Gastrocnemius medialis (tissue), 4 donors: ENCODE measurements at regions of chr16 and their contacts with region 1.

Region 1: GRCh38 chr16:56317998-56318826 is 107.1 kb downstream of the AMFR start:
- DNase-seq: peak; percentile 58 to 72
- ATAC-seq: peak; percentile 87 to 95
- H3K4me3 ChIP-seq: peak overlapping the region; percentile 9 to 41 (median 32)
- H3K27ac ChIP-seq: no peak overlapping the region
- H3K4me1 ChIP-seq: peaks cover 0 to 4% of the 10 kb centered on the region in 2 donors
- H3K27me3 ChIP-seq: no peaks in the 10 kb centered on the region
- CTCF ChIP-seq: peak; percentile 86 to 96 (median 88)
- POLR2A ChIP-seq: no peak

Region 2: DNA sequence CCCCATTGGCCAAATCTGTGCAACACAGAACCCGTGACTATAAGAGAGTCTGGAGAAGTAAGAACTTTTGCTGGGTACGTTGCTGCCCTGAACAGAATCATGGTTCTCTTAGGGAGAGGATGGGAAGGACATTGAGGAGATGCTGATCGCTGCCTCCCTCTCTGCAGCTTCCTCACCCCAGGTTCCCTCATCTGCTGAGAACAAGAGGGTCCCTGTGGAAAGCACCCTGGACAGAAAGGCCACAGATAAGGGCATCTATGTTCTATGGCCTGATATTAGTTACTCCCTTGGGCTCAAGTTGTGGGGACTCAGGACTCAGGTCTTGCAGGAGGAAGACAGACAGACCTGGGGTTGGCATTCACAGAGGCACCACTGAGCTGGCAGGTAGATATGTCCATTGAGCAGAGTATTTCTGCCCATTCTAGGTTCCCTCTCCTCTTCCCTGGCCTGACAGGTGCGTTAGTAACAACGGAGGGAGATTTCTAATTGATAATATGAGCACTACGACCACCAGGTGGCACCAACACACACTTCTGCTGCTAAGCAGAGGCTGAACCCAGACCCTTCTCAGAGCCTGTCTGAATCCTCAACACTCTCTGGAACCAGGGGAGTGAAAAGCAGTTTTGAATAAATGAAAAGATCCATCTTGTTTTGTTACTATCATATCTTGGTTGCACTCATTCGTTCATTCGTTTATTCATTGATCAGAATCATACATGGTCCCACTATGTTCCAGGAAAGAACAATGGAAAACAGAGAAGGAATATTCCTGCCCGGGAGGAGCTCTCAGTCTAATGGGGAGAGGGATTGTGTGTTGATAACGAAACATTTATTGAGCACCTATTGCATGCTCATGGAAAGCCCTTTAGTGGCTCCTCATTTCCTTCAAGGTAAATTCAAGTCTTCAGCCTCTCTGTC is 606.0 kb before region 1 on chr16:
- in situ Hi-C with region 1: loop called in 1 of 4 experiments (anchors 25 kb)
- intact Hi-C with region 1: no loop called
- DNase-seq: peak in 1 of 2 donors; percentile 30
- ATAC-seq: peak in 1 of 2 donors; percentile 74
- H3K4me3 ChIP-seq: no peak overlapping the region
- H3K27ac ChIP-seq: no peak overlapping the region
- H3K4me1 ChIP-seq: no peaks in the 10 kb centered on the region
- H3K27me3 ChIP-seq: no peaks in the 10 kb centered on the region
- CTCF ChIP-seq: peak; percentile 42 to 67 (median 59)
- POLR2A ChIP-seq: no peak

Region 3: DNA sequence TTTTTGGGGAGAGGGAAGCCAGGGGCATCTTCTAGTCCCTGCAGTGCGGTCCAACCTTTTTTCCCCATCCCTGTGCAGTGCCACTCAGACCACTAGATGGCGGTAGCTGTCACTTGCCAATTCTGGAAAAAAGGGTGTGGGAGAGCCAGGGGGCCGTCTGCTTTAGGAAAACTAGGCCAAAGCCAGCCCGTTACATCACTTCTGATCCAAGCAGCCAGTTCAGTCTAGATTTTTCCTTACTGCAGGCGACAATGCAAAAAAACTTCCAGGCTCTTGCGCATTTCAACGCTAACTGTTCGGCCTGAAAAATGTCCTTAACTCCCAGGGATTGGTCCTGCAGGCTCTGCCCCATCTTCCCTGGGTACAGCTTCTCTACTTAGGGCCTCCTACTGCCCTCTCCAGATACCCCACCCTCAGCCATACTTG is 373.8 kb before region 1 on chr16:
- in situ Hi-C with region 1: loop called (anchors 5 kb)
- intact Hi-C with region 1: loop called (anchors 1 kb)
- DNase-seq: peak; percentile 40 to 60
- ATAC-seq: peak; percentile 78 to 80
- H3K4me3 ChIP-seq: no peak overlapping the region
- H3K27ac ChIP-seq: no peak overlapping the region
- H3K4me1 ChIP-seq: peaks cover 0 to 3% of the 10 kb centered on the region in 2 donors
- H3K27me3 ChIP-seq: peaks cover 0 to 2% (median 0%) of the 10 kb centered on the region in 3 donors
- CTCF ChIP-seq: peak; percentile 66 to 89 (median 76)
- POLR2A ChIP-seq: no peak

Region 4: DNA sequence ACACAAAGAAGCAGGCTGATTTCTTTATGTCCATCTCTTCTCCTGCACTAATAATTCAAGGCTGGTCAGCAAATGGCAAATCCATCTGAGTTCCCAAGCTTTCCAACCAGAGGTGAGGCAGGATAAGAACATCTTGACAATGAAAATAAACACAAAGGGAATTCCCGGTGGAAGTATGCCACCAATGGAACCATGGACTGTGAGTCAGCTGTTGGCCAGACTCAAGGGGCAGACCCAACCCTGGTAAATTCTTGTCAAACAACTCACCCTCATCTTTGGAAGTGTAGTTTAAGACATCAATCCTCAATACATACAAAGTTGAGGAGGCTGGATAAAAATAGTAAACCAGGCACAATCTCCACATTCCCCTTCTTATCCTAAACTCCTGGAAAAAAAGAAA is 368.7 kb before region 1 on chr16:
- in situ Hi-C with region 1: loop called (anchors 5 kb)
- intact Hi-C with region 1: loop called (anchors 1 kb)
- DNase-seq: no peak
- ATAC-seq: no peak
- H3K4me3 ChIP-seq: no peak overlapping the region
- H3K27ac ChIP-seq: no peak overlapping the region
- H3K4me1 ChIP-seq: peaks cover 0 to 1% of the 10 kb centered on the region in 2 donors
- H3K27me3 ChIP-seq: no peaks in the 10 kb centered on the region
- CTCF ChIP-seq: no peak
- POLR2A ChIP-seq: no peak

Region 5: DNA sequence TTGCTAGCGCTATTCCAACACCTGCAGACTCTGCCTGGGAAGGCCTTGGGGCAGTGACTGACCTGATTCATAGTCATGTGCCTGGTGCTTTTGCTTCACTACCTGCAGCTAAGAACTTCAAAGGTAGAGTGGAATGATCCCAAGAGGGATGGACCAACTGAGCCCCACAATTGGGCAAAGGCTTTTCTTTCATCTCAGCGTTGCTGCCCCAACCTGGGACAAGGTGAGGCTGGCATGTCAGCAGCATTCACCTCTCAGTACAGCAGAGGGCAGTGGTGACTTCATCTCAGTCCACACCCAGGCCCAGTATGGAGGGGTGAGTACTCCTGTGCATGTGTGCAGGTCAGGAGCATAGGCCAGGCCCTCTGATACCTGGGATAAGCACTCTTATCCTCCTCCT is 276.5 kb before region 1 on chr16:
- in situ Hi-C with region 1: no loop called
- intact Hi-C with region 1: loop called (anchors 1 kb)
- DNase-seq: no peak
- ATAC-seq: no peak
- H3K4me3 ChIP-seq: no peak overlapping the region
- H3K27ac ChIP-seq: no peak overlapping the region
- H3K4me1 ChIP-seq: no peaks in the 10 kb centered on the region
- H3K27me3 ChIP-seq: no peaks in the 10 kb centered on the region
- CTCF ChIP-seq: no peak
- POLR2A ChIP-seq: no peak

Region 6: DNA sequence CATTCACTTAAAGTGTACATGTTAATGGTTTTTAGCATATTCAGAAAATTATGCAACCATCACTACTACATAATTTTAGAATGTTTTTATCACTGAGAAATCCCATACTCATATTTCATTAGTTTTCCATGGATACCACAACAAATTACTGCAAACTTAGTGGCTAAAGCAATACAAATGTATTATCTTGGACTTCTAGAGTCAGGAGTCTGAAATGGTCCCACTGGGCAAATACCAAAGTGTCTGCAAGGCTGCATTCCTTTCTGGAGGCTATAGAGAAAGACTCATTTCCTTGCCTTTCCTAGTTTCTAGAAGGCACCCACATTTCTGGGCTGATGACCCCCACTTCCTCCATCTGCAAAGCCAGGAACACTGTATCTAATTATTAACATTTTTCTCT is 143.8 kb before region 1 on chr16:
- in situ Hi-C with region 1: no loop called
- intact Hi-C with region 1: no loop called
- DNase-seq: no peak
- ATAC-seq: no peak
- H3K4me3 ChIP-seq: no peak overlapping the region
- H3K27ac ChIP-seq: no peak overlapping the region
- H3K4me1 ChIP-seq: no peaks in the 10 kb centered on the region
- H3K27me3 ChIP-seq: no peaks in the 10 kb centered on the region
- CTCF ChIP-seq: no peak
- POLR2A ChIP-seq: no peak

Region 7: DNA sequence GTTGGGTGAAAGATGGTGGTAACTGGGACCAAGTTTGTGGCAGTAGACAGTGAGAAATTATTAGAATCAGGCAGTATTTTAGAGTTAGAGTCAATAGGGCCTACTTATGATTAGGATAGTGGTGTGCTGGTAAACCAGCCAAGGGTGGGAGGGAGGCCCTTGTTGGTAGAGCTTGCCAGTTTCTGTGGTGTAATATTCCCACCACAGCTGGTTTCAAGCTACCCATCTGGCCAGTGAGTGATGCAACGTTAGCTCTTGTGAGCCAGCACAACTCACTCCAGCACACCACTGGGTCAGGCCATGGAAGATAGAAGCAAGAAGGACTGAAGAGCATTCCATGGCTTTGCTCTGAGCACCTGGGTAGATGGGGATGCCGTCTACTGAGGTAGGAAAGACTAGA is 92.0 kb before region 1 on chr16:
- in situ Hi-C with region 1: no loop called
- intact Hi-C with region 1: no loop called
- DNase-seq: peak; percentile 31 to 54
- ATAC-seq: peak; percentile 55 to 78
- H3K4me3 ChIP-seq: no peak overlapping the region
- H3K27ac ChIP-seq: no peak overlapping the region
- H3K4me1 ChIP-seq: no peaks in the 10 kb centered on the region
- H3K27me3 ChIP-seq: no peaks in the 10 kb centered on the region
- CTCF ChIP-seq: no peak
- POLR2A ChIP-seq: no peak

Region 8: DNA sequence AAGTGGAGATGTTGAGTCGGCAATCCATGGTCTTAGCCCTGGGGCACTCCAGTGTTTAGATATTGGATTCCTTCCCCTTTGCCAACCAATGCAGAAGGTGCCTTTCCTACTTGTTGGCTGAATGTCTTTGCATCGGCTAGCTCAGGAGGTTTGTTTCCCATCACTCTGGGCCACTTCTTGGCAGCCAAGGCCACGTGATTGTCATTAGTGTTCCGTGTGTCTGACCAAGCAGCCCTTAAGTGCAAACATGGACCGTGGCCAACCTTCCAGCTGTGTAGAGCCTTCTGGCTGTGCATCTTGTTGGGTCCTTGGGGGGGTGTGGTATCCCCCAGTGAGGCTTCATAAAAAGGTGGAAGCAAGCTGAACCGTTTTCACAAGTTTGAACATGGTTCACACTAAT is 61.0 kb before region 1 on chr16:
- in situ Hi-C with region 1: no loop called
- intact Hi-C with region 1: no loop called
- DNase-seq: peak in 1 of 2 donors; percentile 20
- ATAC-seq: no peak
- H3K4me3 ChIP-seq: no peak overlapping the region
- H3K27ac ChIP-seq: peak overlapping the region in 2 of 4 donors; percentile 55 to 57
- H3K4me1 ChIP-seq: peaks cover 4% of the 10 kb centered on the region in 2 donors
- H3K27me3 ChIP-seq: no peaks in the 10 kb centered on the region
- CTCF ChIP-seq: no peak
- POLR2A ChIP-seq: no peak

Region 9: GRCh38 chr16:56450986-56451752 is 133.0 kb after region 1 on chr16 and contains the starts of genes NUDT21 and OGFOD1:
- in situ Hi-C with region 1: no loop called
- intact Hi-C with region 1: no loop called
- DNase-seq: peak; percentile 98
- ATAC-seq: peak; percentile 97 to 98
- H3K4me3 ChIP-seq: peak within 1 kb of the TSS; percentile 87 to 99 (median 92)
- H3K27ac ChIP-seq: peak within 1 kb of the TSS; percentile 85 to 96 (median 94)
- H3K4me1 ChIP-seq: peaks cover 34 to 36% of the 10 kb centered on the region in 2 donors
- H3K27me3 ChIP-seq: no peaks in the 10 kb centered on the region
- CTCF ChIP-seq: no peak
- POLR2A ChIP-seq: peak; percentile 76 to 89
- total RNA-seq, gene NUDT21: 24.3 to 71.5 (median 35.9) TPM
- total RNA-seq, gene OGFOD1: 86.1 to 115 (median 92.9) TPM